Aorta (tissue), 5 donors: ENCODE measurements at regions of chr2 and their contacts with region 1.

Region 1: DNA sequence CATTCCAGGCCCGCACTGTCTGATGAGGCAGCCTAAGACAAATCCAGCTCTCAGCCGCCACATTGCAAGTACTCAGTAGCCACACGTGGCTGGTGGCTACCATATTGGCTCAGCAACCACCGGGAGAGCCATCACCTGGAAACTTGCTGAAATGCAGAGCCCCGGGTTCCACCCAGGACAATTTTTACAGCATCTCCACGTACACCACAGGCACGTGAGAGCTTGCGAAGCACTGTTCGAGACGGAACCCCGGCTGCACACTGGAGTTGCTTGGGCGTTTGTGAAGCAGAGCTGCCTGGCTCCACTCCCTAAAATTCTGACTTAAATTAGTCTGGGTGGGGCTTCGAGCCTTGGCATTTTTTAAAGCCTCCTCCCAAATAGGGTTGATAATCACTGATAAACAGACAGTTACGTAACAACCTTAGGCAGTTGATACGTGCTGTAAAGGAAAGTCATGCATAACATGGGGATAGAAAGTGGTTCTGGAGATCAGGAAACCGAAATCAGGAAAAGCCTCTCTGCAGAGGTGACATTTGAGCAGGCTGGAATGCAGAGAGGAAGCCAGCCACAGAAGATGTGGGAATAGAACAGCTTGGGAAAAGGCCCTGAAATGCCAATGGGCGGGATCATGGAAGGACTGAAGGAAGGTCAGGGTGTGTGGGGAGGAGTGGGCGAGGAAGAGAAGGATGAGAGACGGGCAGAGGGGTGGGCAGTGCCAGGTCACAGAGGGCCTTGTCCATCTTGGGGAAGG is 6.2 kb downstream of the ASAP2 start:
- DNase-seq: peak in 1 of 2 donors; percentile 74
- ATAC-seq: peak; percentile 57
- H3K4me3 ChIP-seq: no peak overlapping the region
- H3K27ac ChIP-seq: peak overlapping the region; percentile 91 to 94
- H3K4me1 ChIP-seq: peaks cover 3 to 14% of the 10 kb centered on the region in 2 donors
- H3K27me3 ChIP-seq: no peaks in the 10 kb centered on the region

Region 2: GRCh38 chr2:9234680-9235387 is 22.0 kb after region 1 on chr2:
- intact Hi-C with region 1: no loop called
- DNase-seq: peak in 1 of 2 donors; percentile 57
- ATAC-seq: peak; percentile 68
- H3K4me3 ChIP-seq: no peak overlapping the region
- H3K27ac ChIP-seq: peak overlapping the region; percentile 89 to 94
- H3K4me1 ChIP-seq: peaks cover 4 to 24% of the 10 kb centered on the region in 2 donors
- H3K27me3 ChIP-seq: no peaks in the 10 kb centered on the region

Region 3: DNA sequence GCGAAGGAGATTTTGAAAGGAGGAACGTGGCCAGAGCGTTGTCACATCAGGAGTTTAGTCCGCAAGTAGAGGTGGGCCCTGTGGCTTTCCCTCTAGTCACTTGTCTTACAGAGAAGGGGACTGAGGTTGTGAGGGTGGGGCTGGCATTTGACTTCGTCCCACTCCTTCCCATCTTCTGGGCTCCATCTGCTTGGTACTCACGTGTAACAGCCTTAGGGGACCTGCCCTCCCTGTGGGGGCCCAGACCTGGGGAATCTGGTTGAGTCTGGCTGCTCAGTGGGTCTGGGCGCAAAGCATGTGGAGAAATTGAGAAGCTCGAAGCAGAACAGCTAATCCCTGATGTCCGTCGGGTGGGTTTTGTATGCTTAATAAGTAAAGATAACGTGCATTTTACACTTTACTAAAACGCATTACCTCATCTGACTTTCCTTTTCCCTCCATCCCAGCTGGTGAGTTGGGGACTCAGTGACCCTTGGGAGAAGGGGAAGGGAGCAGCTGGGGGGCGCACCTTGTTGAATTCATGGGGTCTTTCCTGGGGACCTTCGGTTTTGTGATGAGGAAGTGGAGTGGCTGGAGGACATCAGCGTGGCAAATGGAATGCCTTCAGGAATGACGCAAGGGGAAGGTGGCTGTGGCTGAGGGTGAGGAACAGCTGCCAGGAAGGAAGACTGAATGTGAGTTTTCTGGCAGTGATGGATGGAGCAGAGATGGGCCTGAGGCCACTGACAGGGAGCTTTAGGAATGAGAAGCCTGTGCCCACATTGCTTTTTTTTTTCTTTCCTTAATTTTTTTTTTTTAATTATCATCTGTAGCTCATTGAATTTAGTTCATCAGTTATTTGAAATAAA is 38.5 kb after region 1 on chr2:
- intact Hi-C with region 1: loop called (anchors 5 kb)
- DNase-seq: peak in 1 of 2 donors; percentile 54
- ATAC-seq: no peak
- H3K4me3 ChIP-seq: no peak overlapping the region
- H3K27ac ChIP-seq: peak overlapping the region; percentile 16 to 64
- H3K4me1 ChIP-seq: peaks cover 0 to 8% of the 10 kb centered on the region in 2 donors
- H3K27me3 ChIP-seq: no peaks in the 10 kb centered on the region

Region 4: GRCh38 chr2:9262671-9263171 is 49.9 kb after region 1 on chr2:
- intact Hi-C with region 1: no loop called
- DNase-seq: no peak
- ATAC-seq: no peak
- H3K4me3 ChIP-seq: no peak overlapping the region
- H3K27ac ChIP-seq: peak overlapping the region; percentile 45 to 46
- H3K4me1 ChIP-seq: peaks cover 0 to 4% of the 10 kb centered on the region in 2 donors
- H3K27me3 ChIP-seq: no peaks in the 10 kb centered on the region

Region 5: DNA sequence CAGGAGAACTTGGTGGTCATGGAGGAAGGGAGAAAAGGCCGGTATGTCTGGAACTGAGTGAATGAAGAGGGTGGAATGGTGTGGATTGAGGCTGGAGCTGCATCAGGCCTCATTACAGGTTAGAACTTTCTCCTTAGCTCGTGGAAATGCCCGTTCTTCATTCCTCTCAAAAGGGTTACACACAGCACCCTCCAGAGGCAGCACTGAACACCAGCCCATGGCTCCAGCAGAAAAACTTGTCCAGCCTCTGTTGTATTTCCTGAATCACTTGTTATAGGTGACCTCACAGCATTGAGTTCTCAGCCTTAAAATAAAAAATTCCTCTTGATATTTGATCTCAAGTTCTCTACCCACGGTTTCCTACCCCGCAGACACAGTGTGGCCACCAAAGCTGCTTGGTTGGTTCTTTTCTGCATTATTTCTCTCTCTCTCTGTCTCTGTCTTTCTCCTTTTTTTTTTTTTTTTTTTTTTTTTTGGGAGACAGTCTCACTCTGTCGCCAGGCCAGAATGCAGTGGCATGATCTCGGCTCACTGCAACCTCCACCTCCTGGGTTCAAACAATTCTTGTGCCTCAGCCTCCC is 120.8 kb after region 1 on chr2:
- intact Hi-C with region 1: loop called in 1 of 2 experiments (anchors 5 kb)
- DNase-seq: peak in 1 of 2 donors; percentile 77
- ATAC-seq: peak; percentile 79
- H3K4me3 ChIP-seq: no peak overlapping the region
- H3K27ac ChIP-seq: peak overlapping the region; percentile 23 to 58
- H3K4me1 ChIP-seq: no peaks in the 10 kb centered on the region
- H3K27me3 ChIP-seq: no peaks in the 10 kb centered on the region